ENCODE measurements at regions of chr6 and their contacts with region 1.

Region 1: DNA sequence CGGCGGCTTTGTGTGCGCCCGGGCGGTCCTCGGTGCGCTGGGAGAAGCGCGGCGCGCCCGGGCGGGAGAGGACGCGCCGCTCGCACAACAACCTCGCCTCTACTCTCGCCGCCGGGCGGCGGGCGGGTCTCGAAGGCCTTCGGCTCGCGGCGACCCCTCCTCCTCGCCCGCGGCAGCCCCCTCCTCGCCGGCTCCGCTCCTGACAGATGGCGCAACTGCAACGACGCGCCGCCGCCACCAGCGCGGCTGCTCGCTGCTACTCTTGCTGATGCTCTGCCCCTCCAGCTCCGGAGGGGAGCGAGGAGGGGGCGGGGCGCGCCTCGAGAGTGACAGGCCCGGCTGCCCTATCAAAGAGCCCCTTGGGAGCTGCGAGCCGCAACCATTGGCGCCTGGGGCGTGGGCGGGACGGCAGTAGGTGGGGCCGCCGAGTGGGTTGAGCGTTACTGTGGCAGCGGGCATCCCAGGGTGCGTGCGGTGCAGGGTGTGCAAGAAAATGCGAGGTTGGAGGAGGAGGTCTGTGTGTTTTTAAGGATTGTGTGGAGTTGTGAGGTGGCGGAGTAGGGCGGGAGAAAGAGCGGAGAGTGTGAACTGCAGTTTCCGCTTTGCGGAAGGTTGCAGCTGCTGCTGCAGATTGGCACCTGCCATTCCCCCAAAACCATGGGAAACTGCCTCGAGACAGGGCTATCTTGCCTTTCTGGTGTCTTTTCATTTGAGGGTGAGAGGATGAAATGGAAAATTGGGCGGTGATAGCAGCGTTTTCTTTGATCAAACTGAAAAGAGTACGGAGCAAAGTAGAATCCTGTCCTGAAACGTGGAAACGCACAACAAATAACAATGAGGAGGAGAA is at the start of gene FYN:
- DNase-seq: peak; percentile 97 to 99 (median 98)
- ATAC-seq: peak; percentile 87
- H3K4me3 ChIP-seq: peak within 1 kb of the TSS; percentile 91 to 94
- H3K4me3 Mint-ChIP-seq: peak within 1 kb of the TSS; percentile 97
- H3K27ac ChIP-seq: peak within 1 kb of the TSS; percentile 86 to 91
- H3K27ac Mint-ChIP-seq: peak within 1 kb of the TSS; percentile 98
- H3K4me1 ChIP-seq: peaks cover 35% of the 10 kb centered on the region
- H3K4me1 Mint-ChIP-seq: peaks cover 41% of the 10 kb centered on the region
- H3K27me3 ChIP-seq: no peaks in the 10 kb centered on the region
- H3K27me3 Mint-ChIP-seq: no peaks in the 10 kb centered on the region
- CTCF ChIP-seq: peak; percentile 42
- total RNA-seq, gene FYN: 479 to 483 TPM

Region 2: GRCh38 chr6:111804627-111805235 is 68.7 kb before region 1 on chr6:
- CTCF ChIA-PET with region 1: interaction called, 3 read pairs
- POLR2A ChIA-PET with region 1: interaction called, 5 read pairs
- intact Hi-C with region 1: loop called (anchors 1 kb)
- DNase-seq: peak; percentile 27 to 92 (median 62)
- ATAC-seq: peak; percentile 73
- H3K4me3 ChIP-seq: no peak overlapping the region
- H3K4me3 Mint-ChIP-seq: peak overlapping the region; percentile 60
- H3K27ac ChIP-seq: peak overlapping the region; percentile 16 to 84
- H3K27ac Mint-ChIP-seq: peak overlapping the region; percentile 97
- H3K4me1 ChIP-seq: peaks cover 70% of the 10 kb centered on the region
- H3K4me1 Mint-ChIP-seq: peaks cover 95% of the 10 kb centered on the region
- H3K27me3 ChIP-seq: no peaks in the 10 kb centered on the region
- H3K27me3 Mint-ChIP-seq: no peaks in the 10 kb centered on the region
- CTCF ChIP-seq: peak; percentile 53

Region 3: DNA sequence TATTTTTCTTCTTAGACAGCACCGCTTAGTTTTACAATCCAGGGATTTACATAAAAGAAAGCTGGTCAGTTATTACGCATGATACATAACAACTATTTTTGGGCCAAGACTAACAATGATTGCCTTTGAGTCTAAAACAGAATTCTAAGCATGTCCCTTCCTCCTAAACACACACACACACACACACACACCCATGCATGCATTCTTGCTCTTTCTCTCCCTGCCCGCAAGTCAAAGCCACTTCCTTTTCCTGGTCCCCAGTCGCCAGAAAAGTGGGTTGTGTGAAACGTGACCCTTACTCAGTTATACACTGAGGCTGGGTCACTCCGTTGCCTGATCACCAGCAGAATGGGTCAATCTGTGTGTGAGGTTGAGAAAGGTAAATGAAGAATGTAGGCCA is 31.6 kb before region 1 on chr6:
- CTCF ChIA-PET with region 1: interaction called, 5 read pairs
- POLR2A ChIA-PET with region 1: interaction called, 6 read pairs
- intact Hi-C with region 1: loop called (anchors 1 kb)
- DNase-seq: peak in 6 of 9 experiments; percentile 46 to 74 (median 60)
- ATAC-seq: no peak
- H3K4me3 ChIP-seq: peak overlapping the region in 1 of 2 experiments; percentile 16
- H3K4me3 Mint-ChIP-seq: no peak overlapping the region
- H3K27ac ChIP-seq: peak overlapping the region in 1 of 2 experiments; percentile 75
- H3K27ac Mint-ChIP-seq: no peak overlapping the region
- H3K4me1 ChIP-seq: peaks cover 100% of the 10 kb centered on the region
- H3K4me1 Mint-ChIP-seq: peaks cover 36% of the 10 kb centered on the region
- H3K27me3 ChIP-seq: no peaks in the 10 kb centered on the region
- H3K27me3 Mint-ChIP-seq: no peaks in the 10 kb centered on the region
- CTCF ChIP-seq: no peak

Region 4: GRCh38 chr6:111857674-111858337 is 15.6 kb before region 1 on chr6:
- CTCF ChIA-PET with region 1: interaction called, 4 read pairs
- POLR2A ChIA-PET with region 1: interaction called, 4 read pairs
- intact Hi-C with region 1: loop called in 1 of 2 experiments (anchors 2 kb)
- DNase-seq: no peak
- ATAC-seq: peak; percentile 12
- H3K4me3 ChIP-seq: no peak overlapping the region
- H3K4me3 Mint-ChIP-seq: peak overlapping the region; percentile 32
- H3K27ac ChIP-seq: peak overlapping the region in 1 of 2 experiments; percentile 21
- H3K27ac Mint-ChIP-seq: peak overlapping the region; percentile 75
- H3K4me1 ChIP-seq: peaks cover 94% of the 10 kb centered on the region
- H3K4me1 Mint-ChIP-seq: peaks cover 96% of the 10 kb centered on the region
- H3K27me3 ChIP-seq: no peaks in the 10 kb centered on the region
- H3K27me3 Mint-ChIP-seq: no peaks in the 10 kb centered on the region
- CTCF ChIP-seq: no peak

Region 5: DNA sequence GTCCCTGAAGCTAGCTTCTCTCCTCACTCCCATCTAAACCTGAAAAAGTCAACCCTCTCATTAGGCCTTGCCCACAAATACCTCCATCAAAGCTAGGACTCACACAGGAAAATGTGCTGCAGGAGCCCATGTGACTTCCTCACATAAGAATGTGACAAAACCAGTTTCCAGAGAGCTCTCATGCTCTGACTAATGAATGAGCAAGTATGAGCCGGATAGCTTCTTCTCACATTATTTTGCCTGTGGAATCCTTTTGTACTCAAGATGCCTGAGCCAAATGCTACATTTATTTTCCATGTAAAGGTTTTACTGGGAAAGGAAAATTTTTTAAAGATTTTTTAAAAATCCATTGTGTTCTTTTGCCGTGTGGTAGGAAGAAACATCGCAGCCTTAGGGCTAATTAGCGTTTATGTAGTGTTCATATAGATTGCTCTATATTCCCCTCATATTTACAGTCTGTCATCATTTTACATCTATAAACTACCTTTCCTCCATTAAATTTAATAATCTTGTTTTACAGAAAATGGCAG is 111.9 kb after region 1 on chr6:
- CTCF ChIA-PET with region 1: interaction called, 4 read pairs
- POLR2A ChIA-PET with region 1: interaction called, 11 read pairs
- intact Hi-C with region 1: no loop called
- DNase-seq: peak in 5 of 9 experiments; percentile 25 to 79 (median 38)
- ATAC-seq: peak; percentile 53
- H3K4me3 ChIP-seq: no peak overlapping the region
- H3K4me3 Mint-ChIP-seq: peak overlapping the region; percentile 13
- H3K27ac ChIP-seq: peak overlapping the region in 1 of 2 experiments; percentile 30
- H3K27ac Mint-ChIP-seq: peak overlapping the region; percentile 81
- H3K4me1 ChIP-seq: peaks cover 66% of the 10 kb centered on the region
- H3K4me1 Mint-ChIP-seq: peaks cover 89% of the 10 kb centered on the region
- H3K27me3 ChIP-seq: no peaks in the 10 kb centered on the region
- H3K27me3 Mint-ChIP-seq: no peaks in the 10 kb centered on the region
- CTCF ChIP-seq: no peak

Region 6: DNA sequence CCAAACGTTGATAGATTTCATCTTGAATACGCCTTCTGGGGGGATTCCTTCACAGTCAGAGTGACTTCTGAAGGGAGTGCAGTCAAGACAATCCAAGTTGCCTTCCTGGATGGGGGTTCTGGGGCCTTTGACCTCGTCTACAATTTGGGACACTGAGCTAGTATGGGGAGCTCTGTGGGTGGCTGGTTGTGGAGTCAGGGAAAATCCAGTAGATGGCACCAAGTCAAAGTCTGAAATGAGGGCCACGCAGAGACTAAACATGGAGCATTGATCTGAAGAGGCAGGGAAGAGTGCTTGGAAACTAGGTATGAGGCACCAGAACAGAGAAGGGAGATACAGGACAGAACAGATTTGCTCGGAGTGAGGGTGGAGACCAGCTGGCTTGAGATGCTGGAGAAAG is 136.9 kb after region 1 on chr6:
- CTCF ChIA-PET with region 1: no interaction called
- POLR2A ChIA-PET with region 1: no interaction called
- intact Hi-C with region 1: no loop called
- DNase-seq: peak in 3 of 9 experiments; percentile 45 to 63 (median 61)
- ATAC-seq: peak; percentile 57
- H3K4me3 ChIP-seq: no peak overlapping the region
- H3K4me3 Mint-ChIP-seq: no peak overlapping the region
- H3K27ac ChIP-seq: no peak overlapping the region
- H3K27ac Mint-ChIP-seq: no peak overlapping the region
- H3K4me1 ChIP-seq: no peaks in the 10 kb centered on the region
- H3K4me1 Mint-ChIP-seq: peaks cover 9% of the 10 kb centered on the region
- H3K27me3 ChIP-seq: no peaks in the 10 kb centered on the region
- H3K27me3 Mint-ChIP-seq: no peaks in the 10 kb centered on the region
- CTCF ChIP-seq: no peak

Measured in CD8-positive, alpha-beta T cell (primary cell).